GM12878 (cell line): ENCODE measurements at regions of chr7 and their contacts with region 1.

Region 1: DNA sequence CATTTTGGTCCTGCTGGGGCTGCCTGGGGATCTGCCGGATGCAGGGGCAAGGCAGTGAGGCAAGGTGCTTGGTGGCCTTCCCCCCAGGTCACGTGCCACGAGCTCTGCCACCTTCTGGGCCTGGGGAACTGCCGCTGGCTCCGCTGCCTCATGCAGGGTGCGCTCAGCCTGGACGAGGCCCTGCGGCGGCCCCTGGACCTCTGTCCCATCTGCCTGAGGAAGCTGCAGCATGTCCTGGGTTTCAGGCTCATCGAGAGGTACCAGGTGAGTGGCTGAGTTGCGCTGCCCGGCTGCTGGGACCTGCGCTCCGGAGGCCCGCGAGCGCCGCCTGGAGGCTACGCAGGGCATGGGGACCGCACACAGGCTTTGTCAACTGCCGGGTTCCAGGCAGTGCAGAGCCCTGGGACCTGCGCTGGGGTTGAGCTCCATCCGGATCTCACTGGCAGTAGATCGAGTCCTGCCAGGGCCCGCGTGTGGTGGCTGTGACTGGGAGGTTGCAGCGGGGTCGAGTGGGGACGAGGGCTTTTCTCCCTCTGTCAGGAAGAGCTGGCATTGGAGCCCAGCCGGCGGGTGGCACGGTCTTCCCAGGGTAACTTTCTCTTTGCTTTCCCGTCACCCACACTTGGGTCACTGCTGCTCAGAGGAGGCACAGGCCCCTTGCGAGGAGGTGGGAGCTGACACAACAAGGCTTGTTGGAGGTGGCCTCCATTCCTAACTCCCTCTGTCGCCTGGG is 21.7 kb downstream of the AMZ1 start:
- DNase-seq: peak; percentile 61
- ATAC-seq: peak; percentile 86
- H3K4me3 ChIP-seq: peak overlapping the region; percentile 56
- H3K27ac ChIP-seq: peak overlapping the region; percentile 89
- H3K4me1 ChIP-seq: peaks cover 28% of the 10 kb centered on the region
- H3K27me3 ChIP-seq: no peaks in the 10 kb centered on the region
- CTCF ChIP-seq: peak; percentile 95 to 100 (median 100); a peak in 5 of 6 replicates
- EP300 ChIP-seq: no peak
- POLR2A ChIP-seq: peak; percentile 68
- RAD21 ChIP-seq: peak; percentile 93

Region 2: GRCh38 chr7:2608921-2609411 is 100.8 kb before region 1 on chr7:
- CTCF ChIA-PET with region 1: interaction called, 14 read pairs
- POLR2A ChIA-PET with region 1: no interaction called
- RAD21 ChIA-PET with region 1: interaction called, 9 read pairs
- SMC1A ChIA-PET with region 1: interaction called, 3 read pairs
- in situ Hi-C with region 1: no loop called
- intact Hi-C with region 1: no loop called
- DNase-seq: no peak
- ATAC-seq: peak; percentile 74
- H3K4me3 ChIP-seq: no peak overlapping the region
- H3K27ac ChIP-seq: no peak overlapping the region
- H3K4me1 ChIP-seq: peaks cover 10% of the 10 kb centered on the region
- H3K27me3 ChIP-seq: no peaks in the 10 kb centered on the region
- CTCF ChIP-seq: peak; percentile 38 to 44 (median 41)
- EP300 ChIP-seq: no peak
- POLR2A ChIP-seq: no peak
- RAD21 ChIP-seq: peak; percentile 26; the same call in 1 of the 2 replicates

Region 3: GRCh38 chr7:2680792-2681490 is 28.8 kb before region 1 on chr7:
- CTCF ChIA-PET with region 1: interaction called, 65 read pairs
- POLR2A ChIA-PET with region 1: interaction called, 7 read pairs
- RAD21 ChIA-PET with region 1: interaction called, 28 read pairs
- SMC1A ChIA-PET with region 1: interaction called, 49 read pairs
- in situ Hi-C with region 1: no loop called
- intact Hi-C with region 1: no loop called
- DNase-seq: no peak
- ATAC-seq: peak; percentile 91
- H3K4me3 ChIP-seq: no peak overlapping the region
- H3K27ac ChIP-seq: no peak overlapping the region
- H3K4me1 ChIP-seq: no peaks in the 10 kb centered on the region
- H3K27me3 ChIP-seq: no peaks in the 10 kb centered on the region; a peak in 1 of 4 replicates
- CTCF ChIP-seq: peak; percentile 64 to 72 (median 72)
- EP300 ChIP-seq: no peak
- POLR2A ChIP-seq: no peak
- RAD21 ChIP-seq: peak; percentile 70

Region 4: GRCh38 chr7:2757904-2758672 is 48.4 kb after region 1 on chr7:
- CTCF ChIA-PET with region 1: interaction called, 33 read pairs
- POLR2A ChIA-PET with region 1: interaction called, 15 read pairs
- RAD21 ChIA-PET with region 1: interaction called, 50 read pairs
- SMC1A ChIA-PET with region 1: interaction called, 31 read pairs
- in situ Hi-C with region 1: no loop called
- intact Hi-C with region 1: loop called (anchors 1 kb)
- DNase-seq: peak; percentile 78
- ATAC-seq: peak; percentile 88
- H3K4me3 ChIP-seq: peak overlapping the region; percentile 64
- H3K27ac ChIP-seq: peak overlapping the region; percentile 86
- H3K4me1 ChIP-seq: peaks cover 33% of the 10 kb centered on the region
- H3K27me3 ChIP-seq: no peaks in the 10 kb centered on the region
- CTCF ChIP-seq: no peak
- EP300 ChIP-seq: peak in 1 of 2 experiments; percentile 82; a peak in 2 of 4 replicates
- POLR2A ChIP-seq: no peak
- RAD21 ChIP-seq: no peak

Region 5: DNA sequence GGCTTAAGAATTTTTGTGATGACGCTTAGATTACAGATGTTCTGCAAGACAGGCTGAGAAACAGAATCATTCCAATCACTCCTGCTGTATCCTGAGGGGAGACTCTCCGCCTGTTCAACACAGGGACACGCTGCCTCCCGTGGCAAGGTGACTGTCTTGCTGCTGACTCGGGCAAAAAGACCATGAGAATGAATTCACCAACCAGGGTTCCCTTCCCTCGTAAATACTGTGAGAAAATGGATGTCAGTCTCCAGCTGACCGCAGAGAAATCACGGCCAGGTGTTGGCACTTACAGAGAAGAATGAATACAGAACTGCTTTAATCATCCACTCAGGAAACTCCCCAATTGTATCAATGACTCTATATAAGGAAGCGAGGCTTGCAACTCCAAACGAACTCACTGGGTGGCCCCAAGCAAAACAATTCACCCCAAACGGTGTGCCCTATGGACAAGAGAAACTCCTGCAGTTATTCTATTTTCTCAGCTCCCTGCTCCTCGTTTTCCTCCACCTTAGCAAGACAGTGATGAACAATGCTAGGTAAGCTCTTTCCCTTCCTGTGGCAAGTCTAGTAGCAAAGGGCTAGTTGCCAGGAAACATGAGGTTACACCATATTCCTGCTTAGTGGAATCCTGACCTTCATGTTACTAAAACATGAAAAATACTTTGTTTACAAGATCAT is 111.6 kb after region 1 on chr7:
- CTCF ChIA-PET with region 1: interaction called, 30 read pairs
- POLR2A ChIA-PET with region 1: interaction called, 3 read pairs
- RAD21 ChIA-PET with region 1: interaction called, 15 read pairs
- SMC1A ChIA-PET with region 1: interaction called, 18 read pairs
- in situ Hi-C with region 1: no loop called
- intact Hi-C with region 1: no loop called
- DNase-seq: peak; percentile 53
- ATAC-seq: peak; percentile 86
- H3K4me3 ChIP-seq: no peak overlapping the region
- H3K27ac ChIP-seq: peak overlapping the region; percentile 4; the same call in 1 of the 2 replicates
- H3K4me1 ChIP-seq: peaks cover 49% of the 10 kb centered on the region
- H3K27me3 ChIP-seq: no peaks in the 10 kb centered on the region
- CTCF ChIP-seq: peak in 2 of 3 experiments; percentile 6 to 8; a peak in 2 of 6 replicates
- EP300 ChIP-seq: peak; percentile 63 to 70; a peak in 2 of 4 replicates
- POLR2A ChIP-seq: no peak
- RAD21 ChIP-seq: peak; percentile 27; the same call in 1 of the 2 replicates

Region 6: DNA sequence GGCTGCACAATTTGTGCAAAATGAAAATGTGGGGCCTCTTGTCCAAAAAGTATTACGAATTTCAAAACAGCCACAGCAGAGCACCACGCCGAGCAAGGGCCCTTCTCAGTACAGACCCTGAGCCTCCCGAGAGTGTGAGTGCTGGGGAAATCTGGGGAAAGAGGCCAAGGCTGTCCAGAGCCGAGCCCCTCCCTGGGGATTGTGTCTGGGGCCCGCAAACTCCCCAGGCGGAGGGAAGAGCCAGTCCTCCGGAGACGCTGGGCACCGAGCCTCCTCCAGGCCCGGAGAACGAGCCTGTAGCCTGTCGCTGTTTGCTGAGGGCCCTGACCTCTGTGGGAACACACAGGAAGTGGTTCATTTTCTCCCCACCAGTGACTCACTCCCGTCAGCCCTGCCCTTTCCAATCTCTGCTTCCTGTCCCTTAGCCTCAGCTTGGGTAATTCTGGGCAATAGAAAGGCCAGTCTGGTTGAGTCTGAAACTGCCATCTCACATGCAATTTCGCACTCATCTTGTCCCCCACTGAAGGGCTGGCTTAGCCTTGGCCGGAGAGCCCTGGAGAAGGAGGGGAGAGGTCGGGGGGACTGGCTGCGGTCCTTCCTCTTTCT is 153.8 kb after region 1 on chr7:
- CTCF ChIA-PET with region 1: interaction called, 23 read pairs
- POLR2A ChIA-PET with region 1: no interaction called
- RAD21 ChIA-PET with region 1: interaction called, 5 read pairs
- SMC1A ChIA-PET with region 1: interaction called, 6 read pairs
- in situ Hi-C with region 1: no loop called
- intact Hi-C with region 1: no loop called
- DNase-seq: peak; percentile 84
- ATAC-seq: peak; percentile 95
- H3K4me3 ChIP-seq: peak overlapping the region; percentile 49; the same call in 1 of the 2 replicates
- H3K27ac ChIP-seq: peak overlapping the region; percentile 89
- H3K4me1 ChIP-seq: peaks cover 24% of the 10 kb centered on the region
- H3K27me3 ChIP-seq: no peaks in the 10 kb centered on the region
- CTCF ChIP-seq: no peak
- EP300 ChIP-seq: peak; percentile 30 to 71; a peak in 1 of 4 replicates
- POLR2A ChIP-seq: peak; percentile 91
- RAD21 ChIP-seq: no peak

Region 7: DNA sequence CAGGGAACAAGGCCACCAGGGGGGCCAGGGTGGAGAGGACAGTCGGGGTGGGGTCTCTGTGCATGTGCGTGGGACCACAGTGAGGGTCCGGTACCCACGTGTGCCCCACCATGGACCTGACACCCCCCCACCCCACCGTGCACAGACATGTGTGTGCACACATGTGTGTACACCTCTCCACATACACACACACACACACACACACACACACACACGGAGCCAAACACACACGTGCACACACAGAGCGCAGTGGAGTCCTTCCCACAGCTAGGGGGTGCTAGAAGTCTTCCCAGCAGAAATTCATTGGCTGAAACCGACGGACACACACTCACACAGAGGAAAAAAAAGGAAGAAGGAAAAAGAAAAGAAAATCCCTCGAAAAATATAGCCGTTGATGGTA is 177.2 kb after region 1 on chr7:
- CTCF ChIA-PET with region 1: no interaction called
- POLR2A ChIA-PET with region 1: no interaction called
- RAD21 ChIA-PET with region 1: no interaction called
- SMC1A ChIA-PET with region 1: no interaction called
- in situ Hi-C with region 1: no loop called
- intact Hi-C with region 1: no loop called
- DNase-seq: no peak
- ATAC-seq: peak; percentile 93
- H3K4me3 ChIP-seq: no peak overlapping the region
- H3K27ac ChIP-seq: no peak overlapping the region
- H3K4me1 ChIP-seq: no peaks in the 10 kb centered on the region
- H3K27me3 ChIP-seq: no peaks in the 10 kb centered on the region
- CTCF ChIP-seq: peak; percentile 88 to 94 (median 88)
- EP300 ChIP-seq: no peak
- POLR2A ChIP-seq: no peak
- RAD21 ChIP-seq: peak; percentile 94